ENCODE measurements at regions of chr16 and their contacts with region 1.

Region 1: GRCh38 chr16:154223-155030 is 2.0 kb downstream of the HBZ start:
- DNase-seq: peak; percentile 49
- ATAC-seq: peak; percentile 49
- H3K4me3 Mint-ChIP-seq: peak overlapping the region; percentile 43
- H3K27ac Mint-ChIP-seq: no peak overlapping the region
- H3K4me1 Mint-ChIP-seq: peaks cover 5% of the 10 kb centered on the region
- H3K27me3 Mint-ChIP-seq: peaks cover 31% of the 10 kb centered on the region

Region 2: DNA sequence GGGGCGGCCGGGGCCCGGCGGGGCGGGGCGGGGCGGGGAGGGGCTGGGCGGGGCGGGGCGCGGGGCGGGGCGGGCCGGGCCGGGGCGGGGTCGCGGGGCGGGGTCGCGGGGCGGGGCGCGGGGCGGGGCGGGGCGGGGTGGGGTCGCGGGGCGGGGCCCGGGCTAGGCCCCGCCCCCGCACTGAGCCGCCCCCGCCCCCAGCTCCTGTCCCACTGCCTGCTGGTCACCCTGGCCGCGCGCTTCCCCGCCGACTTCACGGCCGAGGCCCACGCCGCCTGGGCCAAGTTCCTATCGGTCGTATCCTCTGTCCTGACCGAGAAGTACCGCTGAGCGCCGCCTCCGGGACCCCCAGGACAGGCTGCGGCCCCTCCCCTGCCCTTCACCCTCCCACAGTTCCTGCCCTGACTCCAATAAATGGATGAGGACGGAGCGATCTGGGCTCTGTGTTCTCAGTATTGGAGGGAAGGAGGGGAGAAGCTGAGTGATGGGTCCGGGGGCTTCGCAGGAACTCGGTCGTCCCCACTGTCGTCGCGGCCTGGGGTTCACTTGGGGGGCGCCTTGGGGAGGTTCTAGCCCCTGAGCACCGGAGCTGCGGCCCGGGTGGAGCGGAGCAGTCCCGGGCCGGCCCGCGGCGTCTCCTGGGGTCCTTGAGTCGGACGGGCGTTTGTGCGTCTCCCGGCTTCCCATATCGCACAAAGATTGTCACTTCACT is 10.6 kb after region 1 on chr16:
- CTCF ChIA-PET with region 1: no interaction called
- POLR2A ChIA-PET with region 1: interaction called, 3 read pairs
- intact Hi-C with region 1: loop called (anchors 1 kb)
- DNase-seq: no peak
- ATAC-seq: peak; percentile 16
- H3K4me3 Mint-ChIP-seq: peak overlapping the region; percentile 26
- H3K27ac Mint-ChIP-seq: no peak overlapping the region
- H3K4me1 Mint-ChIP-seq: peaks cover 5% of the 10 kb centered on the region
- H3K27me3 Mint-ChIP-seq: peaks cover 32% of the 10 kb centered on the region